ENCODE measurements at regions of chr1 and their contacts with region 1.

Region 1: GRCh38 chr1:109687616-109688499 is at the start of gene GSTM1:
- DNase-seq: peak; percentile 94
- ATAC-seq: peak; percentile 99
- H3K4me3 Mint-ChIP-seq: peak within 1 kb of the TSS; percentile 88
- H3K27ac Mint-ChIP-seq: peak within 1 kb of the TSS; percentile 96
- H3K4me1 Mint-ChIP-seq: peaks cover 20% of the 10 kb centered on the region
- H3K27me3 Mint-ChIP-seq: no peaks in the 10 kb centered on the region
- total RNA-seq, gene GSTM1: 94.0 to 116 TPM

Region 2: GRCh38 chr1:109041621-109042468 is 646.0 kb before region 1 on chr1 and contains the start of gene WDR47:
- CTCF ChIA-PET with region 1: no interaction called
- POLR2A ChIA-PET with region 1: no interaction called
- intact Hi-C with region 1: no loop called
- DNase-seq: peak; percentile 98
- ATAC-seq: peak; percentile 99
- H3K4me3 Mint-ChIP-seq: peak within 1 kb of the TSS; percentile 82
- H3K27ac Mint-ChIP-seq: peak within 1 kb of the TSS; percentile 65
- H3K4me1 Mint-ChIP-seq: peaks cover 16% of the 10 kb centered on the region
- H3K27me3 Mint-ChIP-seq: no peaks in the 10 kb centered on the region
- total RNA-seq, gene WDR47: 6.9 to 7.6 TPM

Region 3: DNA sequence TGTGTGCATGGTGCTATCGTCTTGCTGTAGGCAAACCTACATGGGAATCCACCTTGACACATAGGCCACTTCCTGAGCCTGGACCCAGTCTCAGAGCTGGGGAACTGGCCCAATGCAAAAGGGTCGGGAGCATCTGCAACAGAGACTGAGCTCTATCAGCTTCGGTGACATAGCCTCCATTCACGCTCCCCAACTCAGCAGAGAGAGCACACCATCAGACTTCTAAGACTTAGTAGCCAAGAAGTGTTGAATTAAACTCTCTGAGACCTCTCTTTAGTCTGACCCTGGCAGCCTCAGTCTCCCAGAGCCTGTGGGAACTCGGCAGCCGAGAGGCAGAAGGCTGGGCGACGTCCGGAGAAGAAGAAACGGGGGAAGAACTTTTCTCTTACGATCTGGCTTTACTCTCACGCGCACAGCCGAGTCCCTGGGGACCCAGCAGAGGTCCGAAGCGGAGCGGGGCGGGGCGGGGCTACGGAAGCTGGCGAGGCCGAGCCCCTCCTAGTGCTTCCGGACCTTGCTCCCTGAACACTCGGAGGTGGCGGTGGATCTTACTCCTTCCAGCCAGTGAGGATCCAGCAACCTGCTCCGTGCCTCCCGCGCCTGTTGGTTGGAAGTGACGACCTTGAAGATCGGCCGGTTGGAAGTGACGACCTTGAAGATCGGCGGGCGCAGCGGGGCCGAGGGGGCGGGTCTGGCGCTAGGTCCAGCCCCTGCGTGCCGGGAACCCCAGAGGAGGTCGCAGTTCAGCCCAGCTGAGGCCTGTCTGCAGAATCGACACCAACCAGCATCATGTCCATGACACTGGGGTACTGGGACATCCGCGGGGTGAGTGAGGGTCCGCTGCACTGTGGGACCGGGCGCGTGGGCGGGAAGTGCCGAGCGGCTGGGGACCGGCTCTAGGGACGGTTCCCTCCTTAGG is 32.0 kb before region 1 on chr1 and contains the start of gene GSTM4:
- CTCF ChIA-PET with region 1: interaction called, 5 read pairs
- POLR2A ChIA-PET with region 1: no interaction called
- intact Hi-C with region 1: loop called in 1 of 2 experiments (anchors 1 kb)
- DNase-seq: peak; percentile 85
- ATAC-seq: peak; percentile 96
- H3K4me3 Mint-ChIP-seq: peak within 1 kb of the TSS; percentile 93
- H3K27ac Mint-ChIP-seq: peak within 1 kb of the TSS; percentile 90
- H3K4me1 Mint-ChIP-seq: peaks cover 12% of the 10 kb centered on the region
- H3K27me3 Mint-ChIP-seq: peaks cover 3% of the 10 kb centered on the region
- total RNA-seq, gene GSTM4: 18.1 to 20.6 TPM

Region 4: GRCh38 chr1:109667452-109668122 is 20.3 kb before region 1 on chr1 and contains the start of gene GSTM2:
- CTCF ChIA-PET with region 1: interaction called, 4 read pairs
- POLR2A ChIA-PET with region 1: interaction called, 4 read pairs
- intact Hi-C with region 1: loop called (anchors 1 kb)
- DNase-seq: peak; percentile 92
- ATAC-seq: peak; percentile 100
- H3K4me3 Mint-ChIP-seq: peak within 1 kb of the TSS; percentile 71
- H3K27ac Mint-ChIP-seq: no peak within 1 kb of the TSS
- H3K4me1 Mint-ChIP-seq: peaks cover 18% of the 10 kb centered on the region
- H3K27me3 Mint-ChIP-seq: no peaks in the 10 kb centered on the region
- total RNA-seq, gene GSTM2: 18.7 to 23.9 TPM

Region 5: DNA sequence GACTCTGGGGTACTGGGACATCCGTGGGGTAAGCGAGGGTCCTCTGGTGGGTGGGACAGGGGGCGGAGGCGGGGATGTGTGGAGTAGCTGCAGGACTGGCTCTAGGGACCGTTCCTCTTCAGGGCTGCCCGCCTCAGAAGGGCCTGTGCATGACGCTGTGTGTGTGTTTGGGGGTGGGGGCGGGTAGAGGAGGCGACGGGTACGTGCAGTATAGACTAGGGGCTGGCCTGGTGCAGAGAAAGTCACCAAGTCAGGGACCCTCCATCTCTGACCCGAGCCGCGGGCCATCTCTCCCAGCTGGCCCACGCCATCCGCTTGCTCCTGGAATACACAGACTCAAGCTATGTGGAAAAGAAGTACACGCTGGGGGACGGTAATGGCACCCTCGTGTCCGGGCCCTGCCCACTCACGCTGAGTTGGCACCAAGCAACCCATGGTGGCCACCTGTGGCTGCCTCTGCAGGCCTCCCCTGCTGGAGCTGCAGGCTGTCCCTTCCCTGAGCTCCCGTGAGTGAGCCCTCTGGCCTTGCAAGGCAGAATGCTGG is 24.5 kb after region 1 on chr1:
- CTCF ChIA-PET with region 1: no interaction called
- POLR2A ChIA-PET with region 1: no interaction called
- intact Hi-C with region 1: loop called in 1 of 2 experiments (anchors 1 kb)
- DNase-seq: no peak
- ATAC-seq: peak; percentile 16
- H3K4me3 Mint-ChIP-seq: no peak overlapping the region
- H3K27ac Mint-ChIP-seq: no peak overlapping the region
- H3K4me1 Mint-ChIP-seq: no peaks in the 10 kb centered on the region
- H3K27me3 Mint-ChIP-seq: peaks cover 5% of the 10 kb centered on the region

Region 6: DNA sequence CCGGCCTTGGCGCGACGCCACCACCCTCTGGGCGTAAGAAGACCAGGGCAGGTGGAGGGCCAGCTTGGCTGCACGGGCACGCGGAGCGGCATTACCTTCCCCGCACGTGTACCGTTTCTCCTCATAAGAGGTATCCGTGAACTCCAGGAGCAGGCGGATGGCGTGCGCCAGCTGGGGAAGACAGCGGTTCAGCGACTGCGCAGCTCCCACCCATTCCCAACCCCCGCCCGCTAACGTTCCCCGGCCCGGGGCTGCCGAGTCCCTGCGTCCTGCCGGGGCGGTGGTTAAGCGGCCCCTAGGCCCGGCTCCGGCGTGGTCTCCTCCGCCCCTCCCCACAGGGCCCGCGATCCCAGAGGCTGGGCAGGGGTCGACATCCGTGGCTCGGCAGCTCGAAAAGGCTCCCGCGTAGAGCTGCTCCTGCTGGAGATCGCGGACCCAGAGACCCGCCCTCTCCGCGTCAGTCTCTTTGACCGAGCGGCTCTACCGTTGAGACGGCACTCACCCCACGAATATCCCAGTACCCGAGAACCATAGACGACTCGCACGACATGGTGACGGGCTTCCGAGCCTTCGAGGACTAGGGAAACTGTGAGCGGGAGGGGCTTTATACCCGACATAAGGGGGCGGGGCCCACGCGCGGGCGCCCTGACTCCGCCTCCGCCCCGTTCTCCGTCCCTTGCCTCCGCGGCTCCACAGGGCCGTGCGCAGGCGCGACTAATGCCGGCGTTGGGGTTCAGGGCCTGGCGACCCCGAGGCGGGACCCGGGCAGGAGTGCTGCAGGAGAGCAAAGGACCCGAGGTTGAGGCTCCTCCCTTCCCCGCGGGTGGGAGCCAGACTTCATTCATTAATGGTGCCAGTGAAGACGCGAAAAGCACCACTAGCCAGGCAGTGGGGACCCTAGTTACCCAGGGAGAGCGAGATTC is 52.1 kb after region 1 on chr1:
- CTCF ChIA-PET with region 1: interaction called, 4 read pairs
- POLR2A ChIA-PET with region 1: no interaction called
- intact Hi-C with region 1: loop called (anchors 1 to 5 kb)
- DNase-seq: peak; percentile 92
- ATAC-seq: peak; percentile 99
- H3K4me3 Mint-ChIP-seq: peak overlapping the region; percentile 82
- H3K27ac Mint-ChIP-seq: peak overlapping the region; percentile 79
- H3K4me1 Mint-ChIP-seq: peaks cover 16% of the 10 kb centered on the region
- H3K27me3 Mint-ChIP-seq: peaks cover 1% of the 10 kb centered on the region